Common myeloid progenitor, CD34-positive (primary cell): ENCODE measurements at regions of chr11 and their contacts with region 1.

Region 1: GRCh38 chr11:18321980-18322711 is at the starts of genes GTF2H1 and HPS5:
- DNase-seq: peak; percentile 99
- H3K4me3 ChIP-seq: peak within 1 kb of the TSS; percentile 70 to 93 (median 86)
- H3K27ac ChIP-seq: peak within 1 kb of the TSS; percentile 98 to 99
- H3K4me1 ChIP-seq: peaks cover 21 to 42% (median 32%) of the 10 kb centered on the region in 4 experiments
- H3K27me3 ChIP-seq: no peaks in the 10 kb centered on the region

Region 2: GRCh38 chr11:18299721-18300120 is 22.4 kb before region 1 on chr11:
- CTCF ChIA-PET with region 1: no interaction called
- POLR2A ChIA-PET with region 1: no interaction called
- DNase-seq: no peak
- H3K4me3 ChIP-seq: no peak overlapping the region
- H3K27ac ChIP-seq: no peak overlapping the region
- H3K4me1 ChIP-seq: no peaks in the 10 kb centered on the region
- H3K27me3 ChIP-seq: no peaks in the 10 kb centered on the region

Region 3: DNA sequence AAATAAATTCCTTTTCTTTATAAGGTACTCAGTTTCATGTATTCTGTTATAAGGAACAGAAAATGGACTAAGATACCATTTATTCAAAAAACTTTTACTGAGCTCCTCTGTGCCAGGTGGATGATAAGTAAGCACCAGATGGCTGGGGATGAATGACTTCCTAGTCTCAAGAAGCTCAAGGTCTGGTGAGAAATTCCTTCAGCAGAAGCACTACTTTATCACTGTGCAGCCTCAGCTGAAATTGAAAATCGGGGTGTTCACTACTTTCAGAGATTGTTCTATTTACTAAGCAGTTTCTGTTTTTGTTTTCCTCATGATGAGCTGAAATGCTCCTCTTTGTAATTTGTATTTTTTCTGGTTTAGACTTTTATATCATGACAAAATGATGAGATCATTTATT is 141.3 kb after region 1 on chr11:
- CTCF ChIA-PET with region 1: no interaction called
- POLR2A ChIA-PET with region 1: no interaction called
- DNase-seq: no peak
- H3K4me3 ChIP-seq: no peak overlapping the region
- H3K27ac ChIP-seq: no peak overlapping the region
- H3K4me1 ChIP-seq: no peaks in the 10 kb centered on the region
- H3K27me3 ChIP-seq: no peaks in the 10 kb centered on the region

Region 4: DNA sequence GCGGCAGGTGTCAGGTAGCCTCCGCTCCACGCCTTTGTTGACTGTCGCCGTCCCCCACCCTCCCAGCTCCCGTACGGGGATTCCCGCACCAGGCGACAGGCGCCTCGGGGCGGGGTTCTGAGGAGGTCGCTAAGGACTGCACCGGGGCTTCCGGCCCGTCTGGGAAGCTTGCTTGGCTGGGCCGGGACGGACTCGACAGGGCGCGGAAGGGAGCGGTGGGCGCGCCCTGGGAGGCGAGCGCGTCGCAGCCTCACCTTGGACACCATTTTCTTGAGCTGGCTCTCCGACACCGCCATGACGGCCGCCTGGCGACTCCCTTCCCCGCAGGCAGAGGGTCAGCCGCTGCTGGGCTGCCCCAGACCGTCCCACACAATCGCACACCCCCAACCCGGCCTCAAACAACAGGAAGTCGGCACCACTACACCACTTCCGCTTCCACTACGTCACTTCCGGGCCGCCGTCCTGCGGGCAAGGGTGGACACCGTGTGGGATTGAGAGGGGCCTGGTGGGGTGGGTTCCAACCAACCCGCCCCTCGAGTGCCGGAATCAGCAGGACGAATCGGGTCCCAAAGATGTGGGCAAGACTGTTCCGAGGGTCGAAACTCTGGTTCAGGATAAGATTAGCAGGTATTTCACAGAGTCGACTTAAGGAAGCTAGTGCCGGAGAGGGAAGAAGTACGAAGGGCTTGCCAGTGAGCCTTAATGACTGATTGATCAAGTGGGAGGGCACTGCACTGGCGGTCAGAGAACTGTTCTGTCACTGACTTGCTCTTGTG is 204.6 kb after region 1 on chr11 and contains the start of gene TSG101:
- CTCF ChIA-PET with region 1: no interaction called
- POLR2A ChIA-PET with region 1: interaction called, 14 read pairs
- DNase-seq: peak; percentile 94 to 96 (median 95)
- H3K4me3 ChIP-seq: peak within 1 kb of the TSS; percentile 77 to 99 (median 85)
- H3K27ac ChIP-seq: peak within 1 kb of the TSS; percentile 98 to 99
- H3K4me1 ChIP-seq: peaks cover 0 to 19% (median 9%) of the 10 kb centered on the region in 4 experiments
- H3K27me3 ChIP-seq: no peaks in the 10 kb centered on the region